ENCODE measurements at regions of chr20 and their contacts with region 1.

Region 1: GRCh38 chr20:54093423-54094267 is 23.3 kb upstream of the BCAS1 start:
- DNase-seq: no peak
- H3K4me3 ChIP-seq: no peak overlapping the region
- H3K27ac ChIP-seq: no peak overlapping the region
- H3K4me1 ChIP-seq: no peaks in the 10 kb centered on the region
- H3K27me3 ChIP-seq: peaks cover 58% of the 10 kb centered on the region
- CTCF ChIP-seq: no peak

Region 2: GRCh38 chr20:54199721-54200176 is 106.1 kb after region 1 on chr20:
- intact Hi-C with region 1: loop called (anchors 2 kb)
- DNase-seq: peak; percentile 55
- H3K4me3 ChIP-seq: no peak overlapping the region
- H3K27ac ChIP-seq: no peak overlapping the region
- H3K4me1 ChIP-seq: no peaks in the 10 kb centered on the region
- H3K27me3 ChIP-seq: peaks cover 11% of the 10 kb centered on the region
- CTCF ChIP-seq: peak; percentile 95

Region 3: GRCh38 chr20:54643791-54644190 is 550.1 kb after region 1 on chr20:
- intact Hi-C with region 1: loop called (anchors 5 kb)
- DNase-seq: no peak
- H3K4me3 ChIP-seq: no peak overlapping the region
- H3K27ac ChIP-seq: no peak overlapping the region
- H3K4me1 ChIP-seq: no peaks in the 10 kb centered on the region
- H3K27me3 ChIP-seq: no peaks in the 10 kb centered on the region
- CTCF ChIP-seq: no peak

Measured in left ventricle myocardium inferior (tissue), 1 donor.